ENCODE measurements at regions of chr5 and their contacts with region 1.

Region 1: GRCh38 chr5:54944364-54944763 is 41.0 kb downstream of the ESM1 start:
- DNase-seq: peak in 1 of 2 donors; percentile 16
- ATAC-seq: no peak
- H3K4me3 ChIP-seq: no peak overlapping the region
- H3K27ac ChIP-seq: no peak overlapping the region
- H3K4me1 ChIP-seq: no peaks in the 10 kb centered on the region
- H3K27me3 ChIP-seq: peaks cover 0 to 19% (median 0%) of the 10 kb centered on the region in 7 donors
- CTCF ChIP-seq: peak; percentile 47 to 80 (median 66)

Region 2: GRCh38 chr5:54905943-54906537 is 38.3 kb before region 1 on chr5:
- intact Hi-C with region 1: loop called in 1 of 10 experiments (anchors 2 kb)
- DNase-seq: peak; percentile 37 to 56
- ATAC-seq: no peak
- H3K4me3 ChIP-seq: no peak overlapping the region
- H3K27ac ChIP-seq: no peak overlapping the region
- H3K4me1 ChIP-seq: peaks cover 0 to 18% (median 0%) of the 10 kb centered on the region in 9 donors
- H3K27me3 ChIP-seq: peaks cover 0 to 5% (median 0%) of the 10 kb centered on the region in 7 donors
- CTCF ChIP-seq: peak; percentile 32 to 82 (median 73)

Region 3: GRCh38 chr5:55146543-55147151 is 202.3 kb after region 1 on chr5:
- intact Hi-C with region 1: loop called in 9 of 10 experiments (anchors 1 to 10 kb)
- DNase-seq: peak; percentile 45 to 76
- ATAC-seq: peak in 7 of 8 donors; percentile 58 to 93 (median 78)
- H3K4me3 ChIP-seq: no peak overlapping the region
- H3K27ac ChIP-seq: no peak overlapping the region
- H3K4me1 ChIP-seq: peaks cover 0 to 7% (median 0%) of the 10 kb centered on the region in 9 donors
- H3K27me3 ChIP-seq: peaks cover 0 to 40% (median 24%) of the 10 kb centered on the region in 7 donors
- CTCF ChIP-seq: peak; percentile 76 to 98 (median 96)

Measured in heart right ventricle (tissue), 16 donors.